CD8-positive, alpha-beta T cell (primary cell): ENCODE measurements at regions of chr1 and their contacts with region 1.

Region 1: GRCh38 chr1:93304716-93305138 is 41.0 kb upstream of the DR1 start:
- DNase-seq: peak in 7 of 9 experiments; percentile 15 to 77 (median 53)
- ATAC-seq: peak; percentile 71
- H3K4me3 ChIP-seq: no peak overlapping the region
- H3K4me3 Mint-ChIP-seq: no peak overlapping the region
- H3K27ac ChIP-seq: no peak overlapping the region
- H3K27ac Mint-ChIP-seq: no peak overlapping the region
- H3K4me1 ChIP-seq: no peaks in the 10 kb centered on the region
- H3K4me1 Mint-ChIP-seq: no peaks in the 10 kb centered on the region
- H3K27me3 ChIP-seq: no peaks in the 10 kb centered on the region
- H3K27me3 Mint-ChIP-seq: no peaks in the 10 kb centered on the region
- CTCF ChIP-seq: peak; percentile 95

Region 2: GRCh38 chr1:93324486-93325464 is 20.0 kb after region 1 on chr1:
- CTCF ChIA-PET with region 1: interaction called, 20 read pairs
- POLR2A ChIA-PET with region 1: no interaction called
- intact Hi-C with region 1: no loop called
- DNase-seq: no peak
- ATAC-seq: no peak
- H3K4me3 ChIP-seq: no peak overlapping the region
- H3K4me3 Mint-ChIP-seq: no peak overlapping the region
- H3K27ac ChIP-seq: no peak overlapping the region
- H3K27ac Mint-ChIP-seq: no peak overlapping the region
- H3K4me1 ChIP-seq: no peaks in the 10 kb centered on the region
- H3K4me1 Mint-ChIP-seq: no peaks in the 10 kb centered on the region
- H3K27me3 ChIP-seq: no peaks in the 10 kb centered on the region
- H3K27me3 Mint-ChIP-seq: no peaks in the 10 kb centered on the region
- CTCF ChIP-seq: no peak

Region 3: DNA sequence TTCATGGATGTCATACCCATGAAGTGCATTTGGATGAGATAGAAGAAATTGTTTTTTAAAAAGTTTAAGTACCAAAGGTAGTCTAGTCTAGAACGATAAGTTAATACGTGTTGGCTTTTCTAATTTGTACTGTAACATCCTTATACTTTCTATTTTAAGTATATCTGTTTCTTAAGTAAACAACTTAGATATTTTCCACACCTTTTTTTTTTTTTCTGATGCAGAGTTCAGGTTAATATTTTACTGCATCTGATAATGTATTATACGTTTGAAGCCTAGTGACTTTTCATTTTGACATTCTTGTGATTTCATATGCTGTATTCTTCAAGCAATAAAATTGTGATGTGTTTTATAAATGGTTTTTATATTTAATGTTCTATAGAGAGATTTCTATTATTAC is 57.5 kb after region 1 on chr1:
- CTCF ChIA-PET with region 1: interaction called, 3 read pairs
- POLR2A ChIA-PET with region 1: no interaction called
- intact Hi-C with region 1: loop called in 1 of 2 experiments (anchors 5 kb)
- DNase-seq: no peak
- ATAC-seq: no peak
- H3K4me3 ChIP-seq: no peak overlapping the region
- H3K4me3 Mint-ChIP-seq: no peak overlapping the region
- H3K27ac ChIP-seq: no peak overlapping the region
- H3K27ac Mint-ChIP-seq: no peak overlapping the region
- H3K4me1 ChIP-seq: peaks cover 22% of the 10 kb centered on the region
- H3K4me1 Mint-ChIP-seq: peaks cover 48% of the 10 kb centered on the region
- H3K27me3 ChIP-seq: no peaks in the 10 kb centered on the region
- H3K27me3 Mint-ChIP-seq: no peaks in the 10 kb centered on the region
- CTCF ChIP-seq: no peak

Region 4: DNA sequence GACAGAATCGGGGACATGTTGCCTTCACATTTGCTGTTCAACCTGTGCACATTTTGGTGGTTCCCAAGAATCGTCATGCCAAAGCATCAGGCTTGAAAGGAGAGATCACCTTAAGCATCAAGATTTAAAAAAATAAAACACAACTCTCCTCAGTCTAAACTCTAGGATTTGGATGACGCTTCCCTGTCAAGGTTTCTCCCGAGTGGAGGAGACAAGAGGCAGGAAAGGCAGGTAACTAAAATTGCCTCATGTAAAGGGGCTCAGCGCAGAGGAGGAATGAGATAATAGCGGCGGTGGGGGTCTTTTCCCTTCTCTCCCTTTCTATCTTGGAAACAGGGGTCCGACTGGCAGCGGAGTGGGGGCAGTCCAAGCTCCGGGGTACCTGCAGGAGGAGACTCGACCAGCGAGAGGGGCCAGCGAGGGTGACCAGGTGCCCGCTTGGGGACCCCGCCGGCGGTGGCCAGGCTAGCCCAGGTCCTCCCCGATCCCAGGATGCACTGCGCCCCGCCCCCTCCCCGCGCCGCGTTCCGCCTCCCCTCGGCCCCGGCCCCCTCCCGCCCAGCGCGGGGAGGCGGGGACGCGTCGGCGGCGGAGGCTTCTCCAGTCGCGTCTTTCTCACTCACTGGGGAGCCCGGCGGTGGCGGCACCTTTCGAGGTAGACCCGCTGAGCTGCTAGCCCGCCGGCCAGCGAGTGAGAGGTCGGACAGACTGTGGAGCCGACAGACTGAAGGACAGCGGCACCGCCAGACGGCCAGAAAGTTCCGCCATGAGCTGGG is 143.0 kb after region 1 on chr1 and contains the start of gene FNBP1L:
- CTCF ChIA-PET with region 1: no interaction called
- POLR2A ChIA-PET with region 1: no interaction called
- intact Hi-C with region 1: loop called in 1 of 2 experiments (anchors 10 kb)
- DNase-seq: peak in 8 of 9 experiments; percentile 34 to 69 (median 51)
- ATAC-seq: peak; percentile 74
- H3K4me3 ChIP-seq: peak within 1 kb of the TSS; percentile 53 to 66
- H3K4me3 Mint-ChIP-seq: peak within 1 kb of the TSS; percentile 91
- H3K27ac ChIP-seq: no peak within 1 kb of the TSS
- H3K27ac Mint-ChIP-seq: no peak within 1 kb of the TSS
- H3K4me1 ChIP-seq: peaks cover 20% of the 10 kb centered on the region
- H3K4me1 Mint-ChIP-seq: peaks cover 17% of the 10 kb centered on the region
- H3K27me3 ChIP-seq: peaks cover 18 to 28% of the 10 kb centered on the region in 2 experiments
- H3K27me3 Mint-ChIP-seq: peaks cover 47% of the 10 kb centered on the region
- CTCF ChIP-seq: no peak
- total RNA-seq, gene FNBP1L: 0.31 to 0.35 TPM

Region 5: GRCh38 chr1:93629099-93630059 is 324.7 kb after region 1 on chr1:
- CTCF ChIA-PET with region 1: interaction called, 5 read pairs
- POLR2A ChIA-PET with region 1: no interaction called
- intact Hi-C with region 1: loop called in 1 of 2 experiments (anchors 5 kb)
- DNase-seq: peak; percentile 8 to 78 (median 37)
- ATAC-seq: peak; percentile 93
- H3K4me3 ChIP-seq: no peak overlapping the region
- H3K4me3 Mint-ChIP-seq: no peak overlapping the region
- H3K27ac ChIP-seq: no peak overlapping the region
- H3K27ac Mint-ChIP-seq: no peak overlapping the region
- H3K4me1 ChIP-seq: no peaks in the 10 kb centered on the region
- H3K4me1 Mint-ChIP-seq: no peaks in the 10 kb centered on the region
- H3K27me3 ChIP-seq: no peaks in the 10 kb centered on the region
- H3K27me3 Mint-ChIP-seq: no peaks in the 10 kb centered on the region
- CTCF ChIP-seq: peak; percentile 90